PC-9 (cell line): ENCODE measurements at regions of chr16 and their contacts with region 1.

Region 1: GRCh38 chr16:12819126-12820117 is 15.7 kb upstream of the CPPED1 start:
- DNase-seq: no peak
- H3K4me3 ChIP-seq: no peak overlapping the region
- H3K27ac ChIP-seq: no peak overlapping the region
- H3K4me1 ChIP-seq: peaks cover 21% of the 10 kb centered on the region
- H3K27me3 ChIP-seq: no peaks in the 10 kb centered on the region
- CTCF ChIP-seq: peak; percentile 57

Region 2: GRCh38 chr16:12740986-12741610 is 78.3 kb before region 1 on chr16:
- CTCF ChIA-PET with region 1: no interaction called
- POLR2A ChIA-PET with region 1: interaction called, 20 read pairs
- intact Hi-C with region 1: no loop called
- DNase-seq: no peak
- H3K4me3 ChIP-seq: no peak overlapping the region
- H3K27ac ChIP-seq: no peak overlapping the region
- H3K4me1 ChIP-seq: no peaks in the 10 kb centered on the region
- H3K27me3 ChIP-seq: no peaks in the 10 kb centered on the region
- CTCF ChIP-seq: no peak

Region 3: GRCh38 chr16:12781777-12782176 is 37.6 kb before region 1 on chr16:
- CTCF ChIA-PET with region 1: interaction called, 10 read pairs
- POLR2A ChIA-PET with region 1: no interaction called
- intact Hi-C with region 1: no loop called
- DNase-seq: no peak
- H3K4me3 ChIP-seq: no peak overlapping the region
- H3K27ac ChIP-seq: no peak overlapping the region
- H3K4me1 ChIP-seq: no peaks in the 10 kb centered on the region
- H3K27me3 ChIP-seq: no peaks in the 10 kb centered on the region
- CTCF ChIP-seq: no peak

Region 4: GRCh38 chr16:13176711-13177110 is 357.3 kb after region 1 on chr16:
- CTCF ChIA-PET with region 1: no interaction called
- POLR2A ChIA-PET with region 1: interaction called, 62 read pairs
- intact Hi-C with region 1: no loop called
- DNase-seq: peak in 1 of 2 experiments; percentile 10
- H3K4me3 ChIP-seq: no peak overlapping the region
- H3K27ac ChIP-seq: peak overlapping the region; percentile 72
- H3K4me1 ChIP-seq: peaks cover 27% of the 10 kb centered on the region
- H3K27me3 ChIP-seq: no peaks in the 10 kb centered on the region
- CTCF ChIP-seq: no peak